Ascending aorta (tissue), 2 donors: ENCODE measurements at regions of chr17 and their contacts with region 1.

Region 1: DNA sequence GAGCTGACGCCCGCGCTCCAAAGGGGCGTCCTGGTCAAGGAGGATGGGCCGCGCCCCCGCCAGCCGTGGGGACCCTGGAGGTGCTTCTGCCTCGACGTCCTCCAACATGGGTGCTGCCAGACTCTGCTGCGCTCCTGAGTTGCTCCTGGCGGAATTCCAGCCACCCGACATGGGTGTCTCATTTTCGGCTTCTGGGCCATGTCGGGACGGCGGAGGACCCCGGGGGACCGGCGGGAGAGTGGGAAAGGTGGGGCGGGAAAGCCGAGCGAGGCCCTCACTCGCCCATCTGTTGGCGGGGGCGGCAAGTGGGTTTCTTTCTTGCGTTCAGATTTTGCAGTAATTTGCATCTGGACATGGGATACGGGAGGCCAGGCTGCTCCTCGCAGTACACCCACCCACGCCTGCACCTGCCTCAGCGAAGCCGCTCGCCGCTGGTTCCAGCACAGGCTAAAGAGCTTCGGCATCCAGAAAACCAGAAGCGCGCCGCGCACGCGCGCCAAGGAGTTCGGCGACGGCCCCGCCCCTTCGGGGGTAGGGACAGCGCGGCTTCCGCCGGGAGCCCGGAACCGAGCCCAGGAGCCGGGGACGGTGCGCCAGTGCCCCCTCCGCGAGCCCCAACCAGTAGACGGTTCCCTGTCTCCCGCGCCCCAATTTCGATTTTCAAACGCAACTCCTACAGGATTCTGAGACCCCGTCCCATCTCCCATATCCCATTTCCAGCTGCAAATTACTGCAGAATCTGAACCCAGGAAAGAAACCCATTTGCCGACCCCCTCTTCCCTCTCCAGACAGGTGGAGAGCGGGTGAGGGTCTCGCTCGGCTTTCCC is at the start of gene ARMC7:
- DNase-seq: peak; percentile 48 to 93
- H3K4me3 ChIP-seq: peak within 1 kb of the TSS; percentile 93 to 94
- H3K27ac ChIP-seq: peak within 1 kb of the TSS; percentile 41 to 44
- H3K4me1 ChIP-seq: peaks cover 3 to 24% of the 10 kb centered on the region in 2 donors
- H3K27me3 ChIP-seq: no peaks in the 10 kb centered on the region
- CTCF ChIP-seq: no peak
- total RNA-seq, gene ARMC7: 1.4 TPM

Region 2: DNA sequence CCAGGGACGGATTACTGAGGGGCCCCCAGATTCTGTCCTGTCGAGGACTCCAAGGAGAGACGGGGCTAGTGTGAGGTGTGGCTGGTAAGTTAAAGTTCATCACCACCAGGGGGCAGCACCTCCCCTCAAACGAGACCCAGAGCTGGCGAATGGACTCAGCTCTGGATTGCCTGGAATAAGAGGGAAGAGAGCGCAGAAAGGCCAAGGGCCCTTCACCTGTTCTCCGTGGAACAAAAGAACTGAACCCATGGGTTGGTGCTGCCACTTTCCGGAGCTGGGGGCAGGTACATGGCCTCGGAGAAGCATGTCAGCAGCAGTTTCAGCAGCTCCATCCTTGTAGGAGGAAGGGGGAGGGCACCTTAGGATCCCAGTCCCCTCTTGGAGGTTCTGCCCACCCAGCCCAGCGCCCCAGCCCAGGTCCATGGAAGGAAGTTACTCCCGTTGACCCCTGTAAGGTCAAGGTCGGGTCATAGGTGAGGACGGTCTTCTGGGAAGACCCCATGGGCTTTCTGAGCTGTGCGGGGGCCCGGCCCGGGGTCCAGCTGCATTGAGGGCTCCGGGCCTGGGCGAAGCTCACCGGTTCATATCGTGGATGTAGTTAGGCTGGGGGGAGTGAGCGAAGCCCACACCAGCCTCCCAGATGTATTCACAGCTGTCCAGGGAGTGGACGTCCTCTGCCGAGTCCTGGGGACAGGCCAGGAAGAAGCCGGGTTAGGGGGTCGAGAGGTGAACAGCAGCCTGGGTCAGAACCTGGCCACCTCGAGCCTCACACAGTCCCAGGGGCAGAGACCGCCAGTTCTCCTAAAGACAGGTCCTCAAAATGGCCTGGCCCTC is 147.7 kb before region 1 on chr17:
- intact Hi-C with region 1: loop called (anchors 5 kb)
- DNase-seq: peak in 1 of 2 donors; percentile 91
- H3K4me3 ChIP-seq: no peak overlapping the region
- H3K27ac ChIP-seq: no peak overlapping the region
- H3K4me1 ChIP-seq: no peaks in the 10 kb centered on the region
- H3K27me3 ChIP-seq: no peaks in the 10 kb centered on the region
- CTCF ChIP-seq: peak; percentile 53 to 84 (median 77)

Region 3: GRCh38 chr17:75034236-75034908 is 75.2 kb before region 1 on chr17:
- intact Hi-C with region 1: no loop called
- DNase-seq: peak; percentile 69 to 95
- H3K4me3 ChIP-seq: peak overlapping the region; percentile 76 to 79
- H3K27ac ChIP-seq: peak overlapping the region; percentile 91 to 95
- H3K4me1 ChIP-seq: peaks cover 0 to 19% of the 10 kb centered on the region in 2 donors
- H3K27me3 ChIP-seq: no peaks in the 10 kb centered on the region
- CTCF ChIP-seq: no peak

Region 4: GRCh38 chr17:75077496-75078283 is 31.9 kb before region 1 on chr17:
- intact Hi-C with region 1: loop called (anchors 2 kb)
- DNase-seq: peak in 1 of 2 donors; percentile 87
- H3K4me3 ChIP-seq: peak overlapping the region; percentile 46 to 66
- H3K27ac ChIP-seq: peak overlapping the region; percentile 88 to 89
- H3K4me1 ChIP-seq: peaks cover 9 to 22% of the 10 kb centered on the region in 2 donors
- H3K27me3 ChIP-seq: no peaks in the 10 kb centered on the region
- CTCF ChIP-seq: peak in 1 of 3 experiments; percentile 16

Region 5: DNA sequence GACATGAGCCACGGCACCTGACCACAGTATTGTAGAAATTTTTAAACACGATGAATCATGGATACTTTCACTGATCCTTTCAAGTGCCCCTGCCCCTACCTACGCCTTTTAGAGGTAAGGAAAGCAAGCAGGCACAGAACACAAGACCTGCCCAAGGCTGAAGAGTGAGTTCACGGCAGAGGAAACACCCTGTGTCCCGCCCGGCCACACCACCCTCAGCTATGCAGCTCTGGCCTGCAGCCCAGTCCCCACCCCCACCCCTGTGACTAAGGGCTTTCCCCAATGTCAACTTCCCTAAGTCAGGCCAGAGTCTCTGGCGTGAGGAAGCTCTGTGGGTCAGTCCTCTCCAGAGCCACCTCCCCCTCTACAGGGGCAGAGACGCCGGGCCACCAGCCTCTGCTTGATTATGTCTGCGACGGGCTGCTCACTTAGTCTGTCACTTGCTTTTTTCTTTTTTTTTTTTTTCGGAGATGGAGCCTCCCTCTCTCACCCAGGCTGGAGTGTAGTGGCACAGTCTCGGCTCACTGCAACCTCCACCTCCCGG is 13.5 kb before region 1 on chr17:
- intact Hi-C with region 1: no loop called
- DNase-seq: peak; percentile 27 to 76
- H3K4me3 ChIP-seq: no peak overlapping the region
- H3K27ac ChIP-seq: no peak overlapping the region
- H3K4me1 ChIP-seq: peaks cover 0 to 3% of the 10 kb centered on the region in 2 donors
- H3K27me3 ChIP-seq: no peaks in the 10 kb centered on the region
- CTCF ChIP-seq: no peak

Region 6: GRCh38 chr17:75173526-75173925 is 63.9 kb after region 1 on chr17:
- intact Hi-C with region 1: loop called (anchors 2 kb)
- DNase-seq: no peak
- H3K4me3 ChIP-seq: no peak overlapping the region
- H3K27ac ChIP-seq: no peak overlapping the region
- H3K4me1 ChIP-seq: no peaks in the 10 kb centered on the region
- H3K27me3 ChIP-seq: no peaks in the 10 kb centered on the region
- CTCF ChIP-seq: no peak

Region 7: DNA sequence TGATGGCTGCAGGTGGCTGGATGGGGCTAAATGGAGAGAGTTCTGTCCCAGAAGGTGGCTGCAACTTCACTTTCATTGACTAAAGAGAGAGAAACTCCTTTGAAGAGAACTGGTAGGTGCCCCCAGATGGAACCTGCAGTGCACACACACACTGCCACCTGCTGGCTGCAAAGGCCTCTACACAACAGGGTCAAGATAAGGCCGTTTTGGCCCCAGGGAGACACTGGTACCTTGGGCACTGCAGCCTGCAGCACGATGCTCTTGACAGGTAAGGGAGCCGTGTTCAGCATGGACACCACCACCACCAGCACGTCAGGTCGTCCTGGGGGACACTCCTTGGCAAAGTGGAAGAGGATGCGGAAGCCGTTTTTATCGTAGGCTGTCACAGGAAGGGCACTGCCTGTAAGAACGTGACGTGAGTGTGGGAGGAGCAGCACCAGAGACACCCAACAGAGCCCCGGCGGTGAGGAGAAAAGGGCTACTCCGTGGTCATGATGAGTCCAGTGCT is 129.1 kb after region 1 on chr17:
- intact Hi-C with region 1: loop called (anchors 1 kb)
- DNase-seq: no peak
- H3K4me3 ChIP-seq: no peak overlapping the region
- H3K27ac ChIP-seq: no peak overlapping the region
- H3K4me1 ChIP-seq: no peaks in the 10 kb centered on the region
- H3K27me3 ChIP-seq: no peaks in the 10 kb centered on the region
- CTCF ChIP-seq: peak; percentile 58 to 79 (median 70)